Activated naive CD4-positive, alpha-beta T cell treated with anti-CD3 and anti-CD28 coated beads for 36 hours (primary cell): ENCODE measurements at regions of chr17 and their contacts with region 1.

Region 1: DNA sequence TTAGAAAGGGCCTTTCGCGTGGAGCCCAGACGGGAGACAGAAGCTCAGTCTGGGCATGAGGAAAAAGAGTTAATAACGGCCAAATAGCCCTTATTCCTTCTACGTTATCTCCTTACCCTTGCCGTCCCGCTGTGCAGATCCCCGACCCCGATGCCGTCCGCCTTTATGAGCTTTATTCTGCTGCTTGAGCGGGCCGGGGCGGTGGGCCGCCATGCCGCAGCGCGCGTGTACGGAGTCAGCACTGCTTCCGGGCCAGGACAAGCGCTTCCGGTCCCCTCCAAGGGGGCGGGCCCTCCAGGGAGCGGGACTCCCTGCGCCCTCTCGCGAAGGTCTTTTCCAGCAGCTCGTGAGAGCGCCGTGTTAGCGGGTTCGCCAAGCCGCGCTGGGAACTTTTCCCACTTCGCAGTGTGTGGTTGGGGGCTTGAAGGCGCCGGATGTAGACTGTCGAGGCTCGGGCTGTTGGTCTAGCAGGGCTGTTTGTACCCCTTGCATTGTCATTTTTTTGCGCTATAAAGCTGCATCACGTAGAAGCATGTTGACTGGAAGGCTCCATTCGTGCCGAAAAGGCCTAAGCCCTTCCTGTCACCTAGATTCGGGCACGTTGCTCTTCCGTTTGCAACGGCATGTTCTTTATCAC is at the start of gene TSR1:
- DNase-seq: peak; percentile 93
- H3K4me3 Mint-ChIP-seq: peak within 1 kb of the TSS; percentile 100
- H3K27ac Mint-ChIP-seq: peak within 1 kb of the TSS; percentile 96
- H3K4me1 Mint-ChIP-seq: peaks cover 15% of the 10 kb centered on the region
- H3K27me3 Mint-ChIP-seq: no peaks in the 10 kb centered on the region
- total RNA-seq, gene TSR1: 51.1 to 51.5 TPM

Region 2: GRCh38 chr17:2303204-2304188 is 32.8 kb before region 1 on chr17 and contains the starts of genes SMG6 and SRR:
- CTCF ChIA-PET with region 1: interaction called, 3 read pairs
- intact Hi-C with region 1: loop called (anchors 1 kb)
- DNase-seq: peak; percentile 95
- H3K4me3 Mint-ChIP-seq: peak within 1 kb of the TSS; percentile 91
- H3K27ac Mint-ChIP-seq: peak within 1 kb of the TSS; percentile 70
- H3K4me1 Mint-ChIP-seq: peaks cover 45% of the 10 kb centered on the region
- H3K27me3 Mint-ChIP-seq: no peaks in the 10 kb centered on the region
- total RNA-seq, gene SMG6: 18.8 to 20.7 TPM
- total RNA-seq, gene SRR: 8.9 to 10.2 TPM

Region 3: DNA sequence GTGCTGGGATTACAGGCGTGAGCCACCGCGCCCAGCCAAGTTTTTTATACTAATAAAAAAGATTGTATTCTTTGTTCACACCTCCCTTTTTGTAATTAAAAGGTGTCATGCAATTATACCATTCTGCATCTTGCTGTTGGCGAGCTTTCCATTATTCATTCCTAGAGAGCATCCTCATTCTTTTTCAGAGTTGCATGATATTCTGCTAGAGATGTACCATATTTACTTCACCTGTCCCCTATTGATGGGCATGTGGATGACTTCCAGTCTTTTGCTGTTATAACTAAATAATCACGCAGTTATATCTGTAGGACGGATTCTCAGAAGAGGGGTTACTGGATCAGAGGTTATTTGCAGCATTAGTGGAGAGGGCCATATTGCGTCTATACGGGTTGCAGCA is 18.0 kb after region 1 on chr17:
- CTCF ChIA-PET with region 1: interaction called, 19 read pairs
- intact Hi-C with region 1: loop called (anchors 1 kb)
- DNase-seq: no peak
- H3K4me3 Mint-ChIP-seq: no peak overlapping the region
- H3K27ac Mint-ChIP-seq: no peak overlapping the region
- H3K4me1 Mint-ChIP-seq: peaks cover 17% of the 10 kb centered on the region
- H3K27me3 Mint-ChIP-seq: no peaks in the 10 kb centered on the region

Region 4: DNA sequence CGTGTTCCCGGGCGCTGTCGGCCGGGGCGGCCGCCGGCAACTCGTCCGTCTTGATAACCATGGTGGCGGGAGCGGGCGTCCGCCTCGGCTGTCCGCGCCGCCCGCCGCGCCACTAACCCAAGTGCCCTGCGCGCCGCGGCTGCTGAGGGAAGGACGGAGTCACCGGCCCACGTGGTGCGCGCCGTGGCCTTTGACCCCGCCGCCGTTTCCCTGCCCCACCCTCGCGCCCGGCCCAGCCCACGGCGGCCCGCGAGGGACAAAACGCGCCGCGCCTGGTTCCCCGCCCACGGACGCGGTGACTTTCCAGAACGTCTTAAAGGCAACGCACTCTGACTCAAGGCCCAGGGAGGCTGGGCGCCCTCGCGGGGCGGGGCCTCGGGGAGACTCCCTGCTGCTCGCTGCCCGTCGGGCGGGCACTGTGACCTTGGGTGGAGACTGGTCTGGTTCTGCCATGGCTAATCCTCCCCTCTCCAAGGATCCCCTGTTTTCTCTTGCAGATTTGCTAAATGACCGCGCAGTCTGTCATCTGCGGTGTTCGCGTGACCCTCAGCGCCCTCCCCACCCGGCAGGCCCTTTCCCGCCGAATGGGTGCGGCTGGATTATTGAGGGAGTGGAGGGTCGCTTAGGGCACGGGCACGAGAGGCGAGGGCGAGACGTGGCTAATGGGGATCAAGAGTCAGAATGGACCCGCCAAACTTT is 375.4 kb after region 1 on chr17 and contains the start of gene CLUH:
- CTCF ChIA-PET with region 1: no interaction called
- intact Hi-C with region 1: loop called (anchors 1 kb)
- DNase-seq: peak; percentile 96
- H3K4me3 Mint-ChIP-seq: peak within 1 kb of the TSS; percentile 88
- H3K27ac Mint-ChIP-seq: peak within 1 kb of the TSS; percentile 82
- H3K4me1 Mint-ChIP-seq: peaks cover 32% of the 10 kb centered on the region
- H3K27me3 Mint-ChIP-seq: no peaks in the 10 kb centered on the region
- total RNA-seq, gene CLUH: 72.7 to 81.4 TPM